PC-3 (cell line): ENCODE measurements at regions of chr13 and their contacts with region 1.

Region 1: DNA sequence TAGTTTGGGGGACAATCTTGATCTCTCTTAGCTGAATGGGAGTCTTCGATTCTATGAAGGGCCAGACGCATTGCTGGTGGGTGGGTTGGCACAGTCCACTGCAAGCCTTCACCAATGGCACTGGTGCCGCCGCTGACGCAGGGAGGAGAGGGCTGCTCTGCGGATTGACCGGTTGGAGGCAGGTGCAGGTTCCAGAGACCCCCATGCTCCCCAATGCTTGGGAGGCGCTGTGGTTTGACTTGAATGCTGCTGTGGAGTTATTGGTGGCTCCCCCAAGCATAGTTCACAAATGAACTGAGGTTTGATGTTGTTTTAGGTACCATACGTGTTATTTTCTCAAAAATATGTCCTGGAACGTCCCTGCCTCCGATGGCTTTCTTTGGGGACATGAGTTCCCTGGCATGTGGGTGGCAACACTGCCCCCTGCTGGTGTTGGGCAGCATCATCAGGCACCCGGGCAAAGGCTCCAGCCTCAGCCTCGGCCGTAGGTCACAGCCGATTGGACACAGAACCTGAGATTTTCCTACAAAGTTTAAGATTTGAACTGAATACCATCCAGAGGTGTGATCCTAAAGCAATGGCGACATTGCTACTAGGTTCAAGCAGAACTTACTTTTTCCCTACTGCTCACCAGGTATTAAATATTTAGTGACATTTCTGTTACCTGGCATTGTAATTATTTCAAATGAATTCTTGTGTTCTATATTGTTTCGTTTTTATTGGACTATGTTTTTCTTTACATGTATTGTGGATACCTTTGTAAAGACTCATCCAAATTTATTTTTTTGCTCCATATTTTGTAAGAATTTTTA is 95.5 kb downstream of the ANKRD10 start:
- DNase-seq: peak; percentile 75
- ATAC-seq: peak; percentile 89
- H3K4me3 ChIP-seq: peak overlapping the region; percentile 55
- H3K27ac ChIP-seq: no peak overlapping the region
- H3K4me1 ChIP-seq: peaks cover 20% of the 10 kb centered on the region
- H3K27me3 ChIP-seq: no peaks in the 10 kb centered on the region
- CTCF ChIP-seq: peak; percentile 91

Region 2: DNA sequence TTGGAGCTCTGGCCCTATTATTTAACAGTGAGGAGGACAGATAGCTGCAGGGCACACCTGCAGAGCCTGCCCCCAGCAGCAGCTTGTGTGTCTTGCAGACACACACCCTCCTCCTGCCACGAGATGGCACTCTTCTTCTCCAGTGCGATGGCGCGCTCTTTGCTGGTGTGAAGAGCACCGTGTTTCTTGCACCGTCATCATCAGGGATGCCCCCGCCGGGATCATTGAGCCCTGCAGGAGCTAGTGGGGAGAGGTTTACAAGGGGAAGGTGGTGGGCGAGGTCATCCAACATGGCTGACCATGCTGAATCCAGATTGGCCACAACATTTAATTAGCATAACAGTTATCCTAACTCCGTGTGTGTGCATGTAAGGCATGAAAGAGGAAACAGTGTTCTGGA is 363.5 kb before region 1 on chr13:
- CTCF ChIA-PET with region 1: no interaction called
- POLR2A ChIA-PET with region 1: no interaction called
- intact Hi-C with region 1: loop called (anchors 5 kb)
- DNase-seq: peak; percentile 78
- ATAC-seq: peak; percentile 99
- H3K4me3 ChIP-seq: peak overlapping the region; percentile 43; the same call in 1 of the 2 replicates
- H3K27ac ChIP-seq: no peak overlapping the region
- H3K4me1 ChIP-seq: peaks cover 7% of the 10 kb centered on the region; the same call in 1 of the 2 replicates
- H3K27me3 ChIP-seq: no peaks in the 10 kb centered on the region
- CTCF ChIP-seq: peak; percentile 88

Region 3: DNA sequence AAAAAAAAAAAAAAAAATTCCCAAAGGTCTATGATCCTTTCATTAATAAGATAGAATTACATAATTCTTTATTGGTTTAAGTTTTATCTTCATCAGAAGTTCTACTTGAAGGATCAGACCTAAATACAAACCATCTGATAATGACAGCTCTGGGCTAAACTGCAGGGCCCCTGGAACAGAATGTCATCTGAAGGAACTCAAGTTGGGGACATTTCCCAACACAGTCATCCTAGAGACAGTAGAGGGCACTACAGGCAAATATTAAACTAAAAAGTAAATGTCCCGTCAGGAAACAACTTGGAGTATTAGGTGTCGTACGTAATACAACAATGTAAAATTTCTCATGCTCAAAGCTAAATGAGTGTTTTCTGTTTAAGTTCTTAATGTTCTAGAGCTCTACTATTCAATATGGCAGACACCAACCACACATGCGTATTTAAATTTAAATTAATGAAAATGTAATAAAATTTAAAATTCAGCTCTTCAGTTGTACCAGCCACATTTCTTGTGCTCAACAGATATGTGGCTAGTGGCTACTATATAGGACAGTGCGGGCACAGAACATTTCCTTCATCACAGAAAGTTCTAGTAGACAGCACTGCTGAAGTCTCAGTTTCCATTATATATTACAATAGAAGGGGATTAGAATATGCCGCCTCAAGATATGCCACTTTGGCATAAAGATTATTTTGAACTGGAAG is 225.8 kb before region 1 on chr13:
- CTCF ChIA-PET with region 1: no interaction called
- POLR2A ChIA-PET with region 1: no interaction called
- intact Hi-C with region 1: loop called (anchors 2 kb)
- DNase-seq: peak; percentile 72
- ATAC-seq: peak; percentile 95
- H3K4me3 ChIP-seq: no peak overlapping the region
- H3K27ac ChIP-seq: no peak overlapping the region
- H3K4me1 ChIP-seq: no peaks in the 10 kb centered on the region
- H3K27me3 ChIP-seq: no peaks in the 10 kb centered on the region
- CTCF ChIP-seq: peak; percentile 66

Region 4: DNA sequence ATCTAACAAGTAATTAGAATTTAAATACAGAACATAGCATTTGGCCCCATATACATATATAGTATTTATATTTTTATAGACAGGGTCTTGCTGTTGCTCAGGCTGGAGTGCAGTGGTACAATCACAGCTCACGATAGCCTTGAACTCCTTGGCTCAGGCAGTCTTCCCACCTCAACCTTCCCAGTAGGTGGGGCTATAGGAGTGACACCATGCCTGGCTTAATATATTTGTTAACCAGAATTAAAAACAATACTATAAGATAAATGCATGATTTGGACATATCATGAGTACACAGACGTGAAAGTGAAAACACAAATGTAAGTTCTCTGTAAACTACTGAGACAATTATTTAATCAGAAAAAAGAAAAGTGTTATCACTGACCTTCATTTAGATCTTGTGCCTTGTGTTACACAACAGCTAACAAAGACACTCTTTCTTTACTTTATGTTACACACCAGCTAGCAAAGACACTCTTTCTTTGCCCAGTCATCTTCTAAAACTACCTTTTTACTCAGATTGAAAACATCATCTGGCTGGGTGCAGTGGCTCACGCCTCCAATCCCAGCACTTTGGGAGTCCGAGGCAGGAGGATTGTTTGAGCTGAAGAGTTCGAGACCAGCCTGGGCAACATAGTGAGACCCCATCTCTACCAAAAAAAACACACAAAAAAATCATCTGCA is 136.1 kb before region 1 on chr13:
- CTCF ChIA-PET with region 1: no interaction called
- POLR2A ChIA-PET with region 1: no interaction called
- intact Hi-C with region 1: loop called (anchors 1 kb)
- DNase-seq: peak; percentile 19
- ATAC-seq: peak; percentile 53
- H3K4me3 ChIP-seq: no peak overlapping the region
- H3K27ac ChIP-seq: no peak overlapping the region
- H3K4me1 ChIP-seq: no peaks in the 10 kb centered on the region
- H3K27me3 ChIP-seq: no peaks in the 10 kb centered on the region
- CTCF ChIP-seq: peak; percentile 45

Region 5: GRCh38 chr13:110715395-110716235 is 103.8 kb before region 1 on chr13:
- CTCF ChIA-PET with region 1: no interaction called
- POLR2A ChIA-PET with region 1: no interaction called
- intact Hi-C with region 1: loop called (anchors 1 kb)
- DNase-seq: peak; percentile 96
- ATAC-seq: peak; percentile 62
- H3K4me3 ChIP-seq: peak overlapping the region; percentile 99
- H3K27ac ChIP-seq: peak overlapping the region; percentile 48
- H3K4me1 ChIP-seq: peaks cover 8% of the 10 kb centered on the region
- H3K27me3 ChIP-seq: no peaks in the 10 kb centered on the region
- CTCF ChIP-seq: peak; percentile 19; the same call in 1 of the 2 replicates